ENCODE measurements at regions of chr1 and their contacts with region 1.

Region 1: GRCh38 chr1:17053685-17054410 is at the start of gene SDHB:
- DNase-seq: peak; percentile 99
- ATAC-seq: peak; percentile 97
- H3K4me3 ChIP-seq: peak within 1 kb of the TSS; percentile 61 to 90 (median 81)
- H3K4me3 Mint-ChIP-seq: peak within 1 kb of the TSS; percentile 99
- H3K27ac ChIP-seq: peak within 1 kb of the TSS; percentile 58 to 83
- H3K27ac Mint-ChIP-seq: peak within 1 kb of the TSS; percentile 97
- H3K4me1 ChIP-seq: peaks cover 12 to 13% of the 10 kb centered on the region in 2 donors
- H3K4me1 Mint-ChIP-seq: peaks cover 30% of the 10 kb centered on the region
- H3K27me3 ChIP-seq: no peaks in the 10 kb centered on the region
- H3K27me3 Mint-ChIP-seq: peaks cover 6% of the 10 kb centered on the region
- CTCF ChIP-seq: no peak
- total RNA-seq, gene SDHB: 57.7 and 58.0 TPM in 2 replicates

Region 2: DNA sequence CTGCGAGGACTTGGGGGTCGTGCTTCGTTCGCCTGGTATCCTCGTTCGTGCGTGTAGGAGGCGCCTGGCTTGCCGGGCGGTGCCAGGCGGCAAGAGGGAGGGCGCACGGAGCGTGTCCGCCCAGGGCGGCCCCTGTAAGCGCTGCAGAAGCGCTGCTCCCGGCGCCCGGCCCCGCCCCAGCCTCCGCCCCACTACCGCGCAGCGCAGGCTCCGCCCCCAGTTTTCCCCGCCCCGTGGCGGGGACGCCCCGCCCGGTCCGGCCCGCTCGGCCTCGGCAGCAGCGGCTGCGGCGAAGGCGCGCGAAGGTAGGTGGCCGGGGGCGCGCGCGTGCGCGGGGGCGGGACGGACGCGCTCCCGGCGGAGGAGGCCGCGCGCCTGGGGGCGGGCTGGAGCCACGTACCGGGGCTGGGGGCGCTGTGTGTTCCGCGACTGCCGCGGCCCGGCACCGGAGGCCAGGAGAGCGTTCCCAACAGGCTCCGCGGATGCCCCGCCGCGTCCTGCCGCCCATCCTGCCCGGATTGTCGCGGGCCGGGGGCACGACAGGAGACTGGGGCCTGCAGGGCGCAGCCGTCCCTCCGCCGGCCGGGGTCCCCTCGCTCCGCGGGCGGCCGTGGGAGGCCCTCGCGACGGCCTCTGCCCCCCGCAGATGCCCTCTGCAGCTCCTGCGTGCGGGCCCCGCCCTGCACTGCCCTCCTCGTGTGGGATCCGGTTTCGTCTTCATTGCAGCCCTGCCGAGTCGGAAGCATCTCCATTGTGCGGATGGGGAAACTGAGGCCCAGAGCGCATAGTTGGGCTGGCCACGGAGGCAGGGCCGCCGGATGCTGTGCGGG is 139.8 kb before region 1 on chr1:
- CTCF ChIA-PET with region 1: no interaction called
- POLR2A ChIA-PET with region 1: no interaction called
- intact Hi-C with region 1: loop called (anchors 1 kb)
- DNase-seq: peak; percentile 96
- ATAC-seq: peak; percentile 97
- H3K4me3 ChIP-seq: peak overlapping the region in 4 of 5 experiments; percentile 65 to 83 (median 72)
- H3K4me3 Mint-ChIP-seq: peak overlapping the region; percentile 91
- H3K27ac ChIP-seq: peak overlapping the region; percentile 62 to 71
- H3K27ac Mint-ChIP-seq: peak overlapping the region; percentile 84
- H3K4me1 ChIP-seq: peaks cover 25 to 27% of the 10 kb centered on the region in 2 donors
- H3K4me1 Mint-ChIP-seq: peaks cover 26% of the 10 kb centered on the region
- H3K27me3 ChIP-seq: no peaks in the 10 kb centered on the region
- H3K27me3 Mint-ChIP-seq: no peaks in the 10 kb centered on the region
- CTCF ChIP-seq: no peak

Region 3: GRCh38 chr1:16999863-17000262 is 54.0 kb before region 1 on chr1:
- CTCF ChIA-PET with region 1: no interaction called
- POLR2A ChIA-PET with region 1: no interaction called
- intact Hi-C with region 1: no loop called
- DNase-seq: no peak
- ATAC-seq: no peak
- H3K4me3 ChIP-seq: no peak overlapping the region
- H3K4me3 Mint-ChIP-seq: no peak overlapping the region
- H3K27ac ChIP-seq: no peak overlapping the region
- H3K27ac Mint-ChIP-seq: no peak overlapping the region
- H3K4me1 ChIP-seq: no peaks in the 10 kb centered on the region
- H3K4me1 Mint-ChIP-seq: no peaks in the 10 kb centered on the region
- H3K27me3 ChIP-seq: no peaks in the 10 kb centered on the region
- H3K27me3 Mint-ChIP-seq: no peaks in the 10 kb centered on the region
- CTCF ChIP-seq: no peak

Region 4: DNA sequence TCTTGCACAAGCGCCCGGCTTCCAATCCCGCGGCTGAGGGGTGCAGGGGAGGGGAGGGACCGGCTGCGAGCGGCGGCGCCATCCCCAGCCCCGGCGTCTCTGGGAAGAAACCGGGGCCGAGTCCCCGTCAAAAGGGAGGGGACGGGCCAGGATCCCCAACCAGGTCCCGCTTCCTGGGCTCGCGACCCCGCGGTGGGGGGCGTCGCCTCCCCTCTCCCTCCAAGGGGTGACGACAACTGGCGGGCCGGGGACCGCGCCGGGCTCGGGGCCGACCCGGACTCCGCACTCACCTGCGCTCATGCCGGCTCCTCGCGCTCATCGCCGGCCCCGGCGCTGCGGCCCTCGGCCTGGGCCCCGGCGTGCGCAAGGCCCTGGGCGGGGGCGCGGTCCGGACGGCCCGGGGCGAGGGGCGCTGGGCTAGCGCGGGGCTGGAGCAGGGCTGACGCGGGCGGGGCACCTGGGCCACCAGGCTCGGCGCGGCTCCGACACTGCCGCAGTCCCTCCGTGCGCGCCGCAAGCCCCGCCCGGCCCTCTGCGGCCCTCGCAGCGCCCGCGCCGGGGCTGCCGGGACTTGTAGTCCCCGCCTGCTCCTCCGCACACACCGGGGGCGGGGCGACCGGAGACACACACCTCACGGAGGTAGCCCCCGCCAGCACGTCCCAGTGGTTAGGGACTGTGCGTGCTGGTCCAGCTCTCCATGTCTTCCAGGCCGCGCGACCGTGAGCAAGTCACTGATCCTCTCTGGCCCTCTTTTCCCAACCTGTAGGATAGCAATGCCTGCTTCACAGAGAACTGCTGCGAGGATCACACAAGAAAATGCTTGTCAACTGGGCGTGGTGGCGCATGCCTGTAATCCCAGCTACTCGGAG is 42.2 kb before region 1 on chr1 and contains the start of gene ATP13A2:
- CTCF ChIA-PET with region 1: no interaction called
- POLR2A ChIA-PET with region 1: no interaction called
- intact Hi-C with region 1: loop called (anchors 1 kb)
- DNase-seq: peak; percentile 88
- ATAC-seq: peak; percentile 99
- H3K4me3 ChIP-seq: peak within 1 kb of the TSS; percentile 21 to 83 (median 70)
- H3K4me3 Mint-ChIP-seq: peak within 1 kb of the TSS; percentile 88
- H3K27ac ChIP-seq: peak within 1 kb of the TSS in 1 of 2 donors; percentile 35
- H3K27ac Mint-ChIP-seq: peak within 1 kb of the TSS; percentile 72
- H3K4me1 ChIP-seq: peaks cover 22 to 39% of the 10 kb centered on the region in 2 donors
- H3K4me1 Mint-ChIP-seq: peaks cover 24% of the 10 kb centered on the region
- H3K27me3 ChIP-seq: no peaks in the 10 kb centered on the region
- H3K27me3 Mint-ChIP-seq: no peaks in the 10 kb centered on the region
- CTCF ChIP-seq: no peak
- total RNA-seq, gene ATP13A2: 39.4 and 41.6 TPM in 2 replicates

Region 5: DNA sequence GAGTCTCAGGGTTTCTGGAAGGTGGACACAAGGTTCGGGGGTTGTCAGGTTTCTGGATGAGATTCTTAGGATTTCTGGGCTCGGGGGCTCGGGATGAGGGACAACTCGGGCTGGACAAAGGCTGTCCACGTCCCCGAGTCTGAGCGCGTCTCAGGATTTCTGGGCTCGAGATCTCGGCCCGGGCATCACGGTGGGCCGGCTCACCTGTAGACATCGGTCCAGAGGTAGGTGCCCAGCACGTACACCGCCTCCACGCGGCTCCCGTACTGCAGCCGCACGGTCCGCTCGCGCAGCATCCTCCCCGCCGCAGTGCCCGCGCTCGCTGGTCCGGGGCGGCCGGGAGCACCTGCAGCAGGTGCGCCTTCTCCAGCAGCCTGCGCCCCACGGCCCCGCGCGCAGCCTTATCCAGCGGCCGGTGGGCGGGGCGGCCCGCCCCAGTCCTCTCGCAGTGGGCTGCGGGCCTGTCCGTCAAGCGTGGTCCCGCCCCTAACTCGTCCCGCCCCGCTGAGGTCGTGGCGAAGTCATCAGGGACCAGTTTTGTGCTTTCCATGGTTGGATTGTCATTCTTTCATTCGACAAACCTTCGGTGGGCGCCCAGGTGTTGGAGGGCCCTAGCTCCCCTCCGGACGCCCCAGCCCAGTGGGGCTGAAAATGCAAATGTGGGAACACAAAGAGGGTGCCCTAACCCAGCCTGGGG is 65.4 kb after region 1 on chr1 and contains the start of gene PADI2:
- CTCF ChIA-PET with region 1: no interaction called
- POLR2A ChIA-PET with region 1: no interaction called
- intact Hi-C with region 1: loop called (anchors 2 kb)
- DNase-seq: peak; percentile 77
- ATAC-seq: peak; percentile 87
- H3K4me3 ChIP-seq: peak within 1 kb of the TSS; percentile 27 to 64 (median 44)
- H3K4me3 Mint-ChIP-seq: peak within 1 kb of the TSS; percentile 83
- H3K27ac ChIP-seq: no peak within 1 kb of the TSS
- H3K27ac Mint-ChIP-seq: peak within 1 kb of the TSS; percentile 32
- H3K4me1 ChIP-seq: peaks cover 19% of the 10 kb centered on the region in 2 donors
- H3K4me1 Mint-ChIP-seq: peaks cover 30% of the 10 kb centered on the region
- H3K27me3 ChIP-seq: peaks cover 0 to 16% (median 6%) of the 10 kb centered on the region in 4 experiments
- H3K27me3 Mint-ChIP-seq: peaks cover 10% of the 10 kb centered on the region
- CTCF ChIP-seq: no peak
- total RNA-seq, gene PADI2: 14.2 and 15.2 TPM in 2 replicates

Region 6: DNA sequence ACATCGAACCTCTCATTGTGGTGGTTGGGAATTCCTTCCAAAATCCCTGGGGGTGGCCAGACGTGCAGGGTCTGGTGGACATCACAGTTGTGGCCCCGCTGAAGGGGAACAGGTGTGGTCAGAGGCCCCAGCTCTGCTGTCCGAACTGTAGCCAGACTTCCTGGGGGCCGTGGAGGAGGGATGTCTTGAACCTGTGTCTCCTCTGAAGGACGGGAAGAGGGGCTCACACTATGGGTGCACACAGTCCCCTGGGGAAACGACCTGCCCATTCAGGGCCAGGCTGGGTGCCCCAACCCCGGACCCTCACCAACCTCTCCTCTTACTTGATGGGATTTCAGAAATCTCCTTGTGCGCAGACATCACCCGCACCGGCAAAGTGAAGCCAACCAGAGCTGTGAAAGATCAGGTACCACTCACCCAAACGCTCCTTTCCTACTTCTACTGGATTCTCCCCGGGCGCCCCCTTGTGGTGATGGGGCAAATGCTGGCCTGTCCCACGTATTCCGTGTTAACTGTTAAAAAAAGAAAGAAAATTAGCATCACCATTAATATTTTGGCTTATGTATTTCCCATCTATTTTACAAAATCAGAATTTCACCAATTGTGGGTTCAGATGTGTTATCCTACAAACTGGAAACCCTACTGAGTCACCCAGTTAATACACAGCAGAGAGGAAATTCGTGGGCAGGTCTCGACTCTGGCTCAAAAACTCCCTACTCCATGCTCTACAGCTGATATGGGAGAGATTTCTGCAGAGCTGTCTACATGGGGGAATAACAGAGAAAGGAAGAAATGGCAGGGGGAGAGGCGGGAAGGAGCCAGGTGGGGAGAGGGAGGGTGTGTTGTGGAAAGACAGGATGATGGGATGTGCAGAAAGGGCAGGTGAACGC is 282.2 kb after region 1 on chr1:
- CTCF ChIA-PET with region 1: interaction called, 11 read pairs
- POLR2A ChIA-PET with region 1: no interaction called
- intact Hi-C with region 1: no loop called
- DNase-seq: peak; percentile 57
- ATAC-seq: peak; percentile 51
- H3K4me3 ChIP-seq: no peak overlapping the region
- H3K4me3 Mint-ChIP-seq: no peak overlapping the region
- H3K27ac ChIP-seq: no peak overlapping the region
- H3K27ac Mint-ChIP-seq: no peak overlapping the region
- H3K4me1 ChIP-seq: no peaks in the 10 kb centered on the region
- H3K4me1 Mint-ChIP-seq: no peaks in the 10 kb centered on the region
- H3K27me3 ChIP-seq: peaks cover 0 to 11% (median 0%) of the 10 kb centered on the region in 4 experiments
- H3K27me3 Mint-ChIP-seq: peaks cover 24% of the 10 kb centered on the region
- CTCF ChIP-seq: peak; percentile 93

Region 7: DNA sequence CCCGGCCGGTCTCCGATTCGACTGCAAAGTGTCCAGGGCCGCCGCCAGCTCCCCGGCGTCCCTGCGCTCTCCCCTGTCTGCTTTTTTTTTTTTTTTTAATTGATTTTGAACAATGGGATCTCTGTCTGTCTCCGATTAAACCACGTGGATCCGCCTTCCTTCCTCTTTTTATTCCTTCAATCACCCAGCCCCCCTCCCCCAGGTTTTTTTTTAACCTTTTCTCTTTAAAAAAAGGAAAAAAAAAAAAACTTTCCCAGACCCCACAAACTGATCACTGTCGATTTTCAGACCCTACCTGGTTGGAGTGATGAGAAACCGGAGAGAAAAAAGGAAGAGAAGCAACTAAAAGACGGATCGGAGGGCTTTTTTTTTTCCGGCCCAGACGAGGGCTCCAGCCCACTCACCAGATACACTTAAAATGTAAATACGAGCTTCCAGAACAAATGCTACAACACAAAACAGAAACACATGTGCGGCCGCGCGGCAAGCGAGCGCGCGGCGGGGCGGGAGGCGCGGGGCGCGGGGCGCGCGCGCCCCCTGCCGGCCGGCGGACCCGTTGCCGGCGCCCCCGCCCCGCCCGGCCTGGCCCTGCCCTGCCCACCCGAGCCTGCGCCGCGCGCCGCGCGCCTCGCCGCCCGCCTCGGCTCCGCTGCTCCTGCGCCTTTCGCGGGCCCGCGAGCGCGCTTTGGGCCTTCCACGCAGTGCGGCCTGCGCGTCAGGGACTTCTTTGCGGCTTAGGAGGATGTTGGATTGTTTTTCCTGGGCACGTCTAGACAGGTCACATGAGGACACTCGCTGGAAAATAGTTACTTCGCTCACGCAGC is 385.6 kb after region 1 on chr1 and contains the start of gene RCC2:
- CTCF ChIA-PET with region 1: no interaction called
- POLR2A ChIA-PET with region 1: no interaction called
- intact Hi-C with region 1: loop called (anchors 1 kb)
- DNase-seq: peak; percentile 87
- ATAC-seq: peak; percentile 69
- H3K4me3 ChIP-seq: peak within 1 kb of the TSS; percentile 77 to 97 (median 87)
- H3K4me3 Mint-ChIP-seq: peak within 1 kb of the TSS; percentile 88
- H3K27ac ChIP-seq: peak within 1 kb of the TSS; percentile 70 to 87
- H3K27ac Mint-ChIP-seq: peak within 1 kb of the TSS; percentile 90
- H3K4me1 ChIP-seq: peaks cover 27 to 35% of the 10 kb centered on the region in 2 donors
- H3K4me1 Mint-ChIP-seq: peaks cover 31% of the 10 kb centered on the region
- H3K27me3 ChIP-seq: peaks cover 0 to 12% (median 3%) of the 10 kb centered on the region in 4 experiments
- H3K27me3 Mint-ChIP-seq: peaks cover 18% of the 10 kb centered on the region
- CTCF ChIP-seq: no peak
- total RNA-seq, gene RCC2: 76.9 TPM in 2 replicates